Posterior vena cava (tissue), 2 donors: ENCODE measurements at regions of chr15 and their contacts with region 1.

Region 1: DNA sequence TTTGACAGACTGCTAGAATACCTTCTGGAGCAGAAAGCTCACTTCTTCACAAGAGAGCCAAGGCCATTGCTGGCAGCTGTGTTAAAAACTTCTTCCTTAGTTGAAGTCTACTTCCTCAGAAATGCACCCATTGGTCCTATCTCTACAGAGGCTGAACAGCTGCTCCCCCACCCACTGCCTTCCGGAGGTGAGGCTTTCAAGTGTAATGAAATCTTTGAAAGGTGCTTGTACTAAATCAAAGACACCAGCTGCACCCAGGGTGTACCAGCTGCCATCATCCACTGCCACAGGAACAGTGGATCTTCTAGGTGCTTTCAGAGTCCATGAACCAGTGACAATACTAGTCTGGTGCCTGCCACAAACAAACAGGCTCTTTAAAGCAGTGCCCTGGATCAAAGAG is 26.4 kb upstream of the HERC1 start:
- DNase-seq: no peak

Region 2: DNA sequence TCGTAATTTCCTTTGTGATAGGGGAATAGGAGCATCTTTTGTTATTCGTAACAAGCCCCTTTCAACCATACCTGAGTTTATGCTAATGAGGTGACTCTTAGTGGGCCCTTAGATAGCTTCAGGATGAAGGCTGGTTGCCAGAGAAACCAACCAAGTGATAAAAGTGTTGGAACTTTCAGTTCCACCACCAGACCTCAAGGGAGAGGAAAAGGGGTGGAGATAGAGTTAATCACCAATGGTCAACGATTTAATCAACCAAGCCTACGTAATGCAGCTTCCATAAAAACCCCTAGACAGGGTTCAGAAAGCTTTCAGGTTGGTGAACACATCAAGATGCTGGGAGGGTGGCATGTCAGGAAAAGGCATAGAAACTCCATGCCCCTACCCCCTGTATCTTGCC is 59.4 kb before region 1 on chr15:
- intact Hi-C with region 1: no loop called
- DNase-seq: no peak

Region 3: DNA sequence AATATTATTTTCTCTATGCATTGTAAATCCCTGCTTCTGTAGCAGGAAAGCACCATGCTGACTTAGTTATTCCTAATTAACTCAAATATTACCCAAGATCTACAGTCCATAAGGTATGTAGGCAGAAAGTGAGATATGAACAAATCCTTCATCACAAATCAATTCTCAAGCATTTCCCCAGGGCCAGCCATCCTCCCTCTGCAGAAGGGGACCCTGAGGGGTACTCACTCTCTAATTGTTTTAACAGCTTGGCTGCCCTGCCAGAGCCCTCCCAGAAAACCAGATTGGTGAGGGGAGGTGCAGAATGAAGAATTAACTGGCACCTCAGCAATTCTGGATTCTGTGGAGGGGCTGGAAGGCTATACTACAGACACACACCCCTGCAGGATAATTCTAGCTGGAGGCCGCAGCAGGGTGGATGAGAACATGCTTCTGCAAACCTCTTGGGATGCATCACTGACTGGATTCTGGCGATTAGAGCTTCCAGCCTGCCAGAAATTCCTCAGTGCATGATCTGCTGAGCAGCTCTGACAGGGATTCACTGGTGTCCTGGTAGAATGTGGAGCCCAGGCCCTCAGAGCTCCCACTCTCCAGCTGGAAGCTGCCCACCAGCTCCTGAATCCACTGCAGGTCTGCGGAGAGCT is 62.2 kb after region 1 on chr15:
- intact Hi-C with region 1: loop called in 1 of 2 experiments (anchors 5 kb)
- DNase-seq: peak; percentile 62